Activated CD4-positive, alpha-beta memory T cell treated with anti-CD3 and anti-CD28 coated beads, Interleukin-2, amount 10 ng/mL, durations not matched to agents 7 days and 5 days (primary cell): ENCODE measurements at regions of chr4 and their contacts with region 1.

Region 1: GRCh38 chr4:7939377-7940108 is at the start of gene AFAP1:
- DNase-seq: peak; percentile 90
- H3K4me3 Mint-ChIP-seq: peak within 1 kb of the TSS; percentile 55
- H3K27ac Mint-ChIP-seq: no peak within 1 kb of the TSS
- H3K4me1 Mint-ChIP-seq: peaks cover 13% of the 10 kb centered on the region
- H3K27me3 Mint-ChIP-seq: peaks cover 16% of the 10 kb centered on the region
- total RNA-seq, gene AFAP1: 5.9 to 6.5 TPM

Region 2: GRCh38 chr4:7876201-7876875 is 63.2 kb before region 1 on chr4:
- CTCF ChIA-PET with region 1: interaction called, 10 read pairs
- POLR2A ChIA-PET with region 1: interaction called, 3 read pairs
- DNase-seq: peak; percentile 59
- H3K4me3 Mint-ChIP-seq: peak overlapping the region; percentile 36
- H3K27ac Mint-ChIP-seq: peak overlapping the region; percentile 67
- H3K4me1 Mint-ChIP-seq: peaks cover 38% of the 10 kb centered on the region
- H3K27me3 Mint-ChIP-seq: no peaks in the 10 kb centered on the region

Region 3: DNA sequence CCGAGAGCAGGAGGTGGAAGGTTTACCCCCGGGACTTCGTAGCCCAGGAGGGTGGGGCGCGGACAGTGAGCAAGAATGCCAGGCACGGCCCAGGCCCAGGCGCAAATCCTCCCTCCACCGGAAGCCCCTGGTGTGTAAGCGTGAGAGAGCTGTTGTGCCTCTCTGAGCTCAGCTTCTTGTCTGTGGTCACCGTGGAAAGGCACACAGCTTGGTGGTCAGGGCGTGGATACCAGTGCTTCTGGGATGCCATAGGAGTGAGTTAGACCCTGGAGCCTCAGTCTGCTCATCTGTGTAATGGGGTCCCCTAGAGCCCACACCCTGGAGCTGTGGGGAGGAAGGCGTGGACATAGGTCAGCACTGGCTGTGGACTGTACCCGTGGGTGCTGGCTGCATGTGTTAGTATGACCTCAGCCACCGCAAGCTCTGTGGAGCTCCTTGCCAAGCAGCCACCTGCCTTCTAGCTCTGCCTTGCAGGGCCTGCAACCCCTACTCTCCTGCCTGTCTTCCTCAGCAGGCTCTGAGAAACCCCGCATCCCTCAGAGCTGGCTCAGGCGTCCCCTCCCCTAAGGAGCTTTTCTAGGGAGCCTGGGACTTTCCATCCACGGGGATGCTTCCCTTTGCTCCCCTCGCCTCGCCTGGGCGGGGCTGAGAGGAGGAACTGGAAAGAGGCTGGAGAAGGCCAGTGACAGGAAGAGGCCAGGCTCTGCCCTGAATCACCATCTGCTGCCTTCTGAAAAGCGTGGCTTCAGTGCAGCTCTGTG is 28.1 kb after region 1 on chr4:
- CTCF ChIA-PET with region 1: interaction called, 3 read pairs
- POLR2A ChIA-PET with region 1: interaction called, 16 read pairs
- DNase-seq: peak; percentile 22
- H3K4me3 Mint-ChIP-seq: no peak overlapping the region
- H3K27ac Mint-ChIP-seq: peak overlapping the region; percentile 41
- H3K4me1 Mint-ChIP-seq: peaks cover 82% of the 10 kb centered on the region
- H3K27me3 Mint-ChIP-seq: no peaks in the 10 kb centered on the region